ENCODE measurements at regions of chr4 and their contacts with region 1.

Region 1: GRCh38 chr4:102760645-102761295 is at the start of gene MANBA:
- DNase-seq: peak; percentile 62 to 81 (median 73)
- ATAC-seq: peak; percentile 91
- H3K4me3 ChIP-seq: peak within 1 kb of the TSS; percentile 62
- H3K4me3 Mint-ChIP-seq: peak within 1 kb of the TSS; percentile 86 to 99 (median 98)
- H3K27ac ChIP-seq: peak within 1 kb of the TSS; percentile 72
- H3K27ac Mint-ChIP-seq: peak within 1 kb of the TSS; percentile 56 to 92 (median 84)
- H3K4me1 ChIP-seq: peaks cover 4 to 16% of the 10 kb centered on the region in 2 donors
- H3K4me1 Mint-ChIP-seq: peaks cover 35 to 50% (median 42%) of the 10 kb centered on the region in 7 donors
- H3K27me3 ChIP-seq: no peaks in the 10 kb centered on the region
- H3K27me3 Mint-ChIP-seq: peaks cover 0 to 13% (median 0%) of the 10 kb centered on the region in 5 donors
- total RNA-seq, gene MANBA: 15.7 to 56.4 (median 29.7) TPM

Region 2: GRCh38 chr4:100895556-100896197 is 1865.1 kb before region 1 on chr4:
- CTCF ChIA-PET with region 1: no interaction called
- POLR2A ChIA-PET with region 1: no interaction called
- intact Hi-C with region 1: loop called in 1 of 2 experiments (anchors 5 kb)
- DNase-seq: peak in 5 of 9 donors; percentile 9 to 24 (median 22)
- ATAC-seq: peak; percentile 60
- H3K4me3 ChIP-seq: peak overlapping the region; percentile 49
- H3K4me3 Mint-ChIP-seq: peak overlapping the region; percentile 76 to 91 (median 83)
- H3K27ac ChIP-seq: peak overlapping the region; percentile 27
- H3K27ac Mint-ChIP-seq: peak overlapping the region; percentile 43 to 91 (median 80)
- H3K4me1 ChIP-seq: peaks cover 0 to 6% of the 10 kb centered on the region in 2 donors
- H3K4me1 Mint-ChIP-seq: peaks cover 5 to 18% (median 18%) of the 10 kb centered on the region in 7 donors
- H3K27me3 ChIP-seq: no peaks in the 10 kb centered on the region
- H3K27me3 Mint-ChIP-seq: peaks cover 0 to 8% (median 0%) of the 10 kb centered on the region in 5 donors

Region 3: GRCh38 chr4:102640669-102641068 is 120.1 kb before region 1 on chr4:
- CTCF ChIA-PET with region 1: no interaction called
- POLR2A ChIA-PET with region 1: no interaction called
- intact Hi-C with region 1: loop called in 1 of 2 experiments (anchors 10 kb)
- DNase-seq: no peak
- ATAC-seq: no peak
- H3K4me3 ChIP-seq: no peak overlapping the region
- H3K4me3 Mint-ChIP-seq: peak overlapping the region in 2 of 10 donors; percentile 17 to 88
- H3K27ac ChIP-seq: no peak overlapping the region
- H3K27ac Mint-ChIP-seq: peak overlapping the region in 3 of 9 donors; percentile 75 to 87 (median 80)
- H3K4me1 ChIP-seq: peaks cover 0 to 14% of the 10 kb centered on the region in 2 donors
- H3K4me1 Mint-ChIP-seq: peaks cover 0 to 56% (median 17%) of the 10 kb centered on the region in 7 donors
- H3K27me3 ChIP-seq: no peaks in the 10 kb centered on the region
- H3K27me3 Mint-ChIP-seq: no peaks in the 10 kb centered on the region

Region 4: GRCh38 chr4:102792361-102792936 is 31.7 kb after region 1 on chr4:
- CTCF ChIA-PET with region 1: no interaction called
- POLR2A ChIA-PET with region 1: interaction called, 3 read pairs
- intact Hi-C with region 1: loop called (anchors 1 to 2 kb)
- DNase-seq: no peak
- ATAC-seq: peak; percentile 41
- H3K4me3 ChIP-seq: no peak overlapping the region
- H3K4me3 Mint-ChIP-seq: no peak overlapping the region
- H3K27ac ChIP-seq: no peak overlapping the region
- H3K27ac Mint-ChIP-seq: peak overlapping the region in 6 of 9 donors; percentile 6 to 48 (median 28)
- H3K4me1 ChIP-seq: no peaks in the 10 kb centered on the region
- H3K4me1 Mint-ChIP-seq: peaks cover 8 to 27% (median 19%) of the 10 kb centered on the region in 7 donors
- H3K27me3 ChIP-seq: no peaks in the 10 kb centered on the region
- H3K27me3 Mint-ChIP-seq: no peaks in the 10 kb centered on the region

Region 5: DNA sequence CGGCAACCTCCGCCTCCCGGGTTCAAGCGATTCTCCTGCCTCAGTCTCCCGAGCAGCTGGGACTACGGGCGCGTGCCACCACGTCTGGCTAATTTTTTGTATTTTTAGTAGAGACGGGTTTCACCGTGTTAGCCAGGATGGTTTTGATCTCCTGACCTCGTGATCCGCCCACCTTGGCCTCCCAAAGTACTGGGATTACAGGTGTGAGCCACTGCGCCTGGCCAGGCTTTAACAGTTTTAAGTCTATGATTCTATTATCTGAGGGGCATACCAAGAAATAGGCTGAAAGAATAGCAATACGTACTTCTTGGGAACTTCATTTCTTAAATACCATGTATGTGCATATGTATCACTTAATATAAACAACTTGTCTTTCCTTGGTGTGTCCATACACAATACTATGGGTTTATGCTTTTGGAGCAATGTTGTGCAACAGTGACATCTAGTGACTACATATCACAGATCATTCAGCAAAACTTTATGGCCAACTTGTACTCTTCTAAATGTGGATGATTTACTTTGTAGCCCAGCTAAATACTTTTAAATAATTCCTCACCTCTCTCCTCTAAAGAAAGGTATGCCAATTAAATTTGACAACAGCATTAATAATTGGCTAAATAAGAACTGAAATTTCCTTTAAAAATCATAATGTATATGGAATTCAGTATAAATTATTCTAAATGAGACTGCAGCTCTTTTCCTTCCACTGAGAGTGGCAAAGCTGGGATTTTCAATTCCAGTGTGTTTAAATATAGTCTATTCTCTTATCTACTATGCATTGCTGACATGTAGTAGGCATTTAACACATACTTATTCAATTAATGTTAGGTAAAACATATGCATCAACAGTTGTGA is 248.3 kb after region 1 on chr4:
- CTCF ChIA-PET with region 1: no interaction called
- POLR2A ChIA-PET with region 1: no interaction called
- intact Hi-C with region 1: loop called in 1 of 2 experiments (anchors 2 kb)
- DNase-seq: peak in 7 of 9 donors; percentile 39 to 67 (median 56)
- ATAC-seq: peak; percentile 93
- H3K4me3 ChIP-seq: no peak overlapping the region
- H3K4me3 Mint-ChIP-seq: no peak overlapping the region
- H3K27ac ChIP-seq: no peak overlapping the region
- H3K27ac Mint-ChIP-seq: no peak overlapping the region
- H3K4me1 ChIP-seq: no peaks in the 10 kb centered on the region
- H3K4me1 Mint-ChIP-seq: peaks cover 0 to 3% (median 0%) of the 10 kb centered on the region in 7 donors
- H3K27me3 ChIP-seq: no peaks in the 10 kb centered on the region
- H3K27me3 Mint-ChIP-seq: peaks cover 0 to 14% (median 0%) of the 10 kb centered on the region in 5 donors

Region 6: GRCh38 chr4:103075901-103076739 is 315.4 kb after region 1 on chr4:
- CTCF ChIA-PET with region 1: no interaction called
- POLR2A ChIA-PET with region 1: no interaction called
- intact Hi-C with region 1: loop called (anchors 2 kb)
- DNase-seq: peak; percentile 53 to 75 (median 68)
- ATAC-seq: peak; percentile 83
- H3K4me3 ChIP-seq: peak overlapping the region; percentile 74
- H3K4me3 Mint-ChIP-seq: peak overlapping the region; percentile 77 to 97 (median 95)
- H3K27ac ChIP-seq: peak overlapping the region; percentile 87
- H3K27ac Mint-ChIP-seq: peak overlapping the region; percentile 86 to 99 (median 97)
- H3K4me1 ChIP-seq: peaks cover 10 to 17% of the 10 kb centered on the region in 2 donors
- H3K4me1 Mint-ChIP-seq: peaks cover 23 to 54% (median 47%) of the 10 kb centered on the region in 7 donors
- H3K27me3 ChIP-seq: no peaks in the 10 kb centered on the region
- H3K27me3 Mint-ChIP-seq: no peaks in the 10 kb centered on the region

Measured in naive thymus-derived CD4-positive, alpha-beta T cell (primary cell).